Prostate gland (tissue), 2 donors: ENCODE measurements at regions of chr11 and their contacts with region 1.

Region 1: GRCh38 chr11:17598700-17599459 is 51.8 kb downstream of the OTOG start:
- DNase-seq: peak; percentile 36
- H3K4me3 ChIP-seq: no peak overlapping the region
- H3K27ac ChIP-seq: no peak overlapping the region
- H3K4me1 ChIP-seq: no peaks in the 10 kb centered on the region
- H3K27me3 ChIP-seq: no peaks in the 10 kb centered on the region
- CTCF ChIP-seq: peak; percentile 55 to 78 (median 70)
- POLR2A ChIP-seq: no peak

Region 2: GRCh38 chr11:17722000-17722643 is 123.2 kb after region 1 on chr11:
- intact Hi-C with region 1: loop called (anchors 10 kb)
- DNase-seq: no peak
- H3K4me3 ChIP-seq: no peak overlapping the region
- H3K27ac ChIP-seq: no peak overlapping the region
- H3K4me1 ChIP-seq: peaks cover 3% of the 10 kb centered on the region
- H3K27me3 ChIP-seq: peaks cover 38% of the 10 kb centered on the region
- CTCF ChIP-seq: no peak
- POLR2A ChIP-seq: no peak

Region 3: GRCh38 chr11:17972987-17973386 is 374.1 kb after region 1 on chr11:
- intact Hi-C with region 1: loop called (anchors 5 kb)
- DNase-seq: peak; percentile 44
- H3K4me3 ChIP-seq: no peak overlapping the region
- H3K27ac ChIP-seq: no peak overlapping the region
- H3K4me1 ChIP-seq: no peaks in the 10 kb centered on the region
- H3K27me3 ChIP-seq: no peaks in the 10 kb centered on the region
- CTCF ChIP-seq: peak in 3 of 4 experiments; percentile 45 to 59 (median 50)
- POLR2A ChIP-seq: no peak

Region 4: DNA sequence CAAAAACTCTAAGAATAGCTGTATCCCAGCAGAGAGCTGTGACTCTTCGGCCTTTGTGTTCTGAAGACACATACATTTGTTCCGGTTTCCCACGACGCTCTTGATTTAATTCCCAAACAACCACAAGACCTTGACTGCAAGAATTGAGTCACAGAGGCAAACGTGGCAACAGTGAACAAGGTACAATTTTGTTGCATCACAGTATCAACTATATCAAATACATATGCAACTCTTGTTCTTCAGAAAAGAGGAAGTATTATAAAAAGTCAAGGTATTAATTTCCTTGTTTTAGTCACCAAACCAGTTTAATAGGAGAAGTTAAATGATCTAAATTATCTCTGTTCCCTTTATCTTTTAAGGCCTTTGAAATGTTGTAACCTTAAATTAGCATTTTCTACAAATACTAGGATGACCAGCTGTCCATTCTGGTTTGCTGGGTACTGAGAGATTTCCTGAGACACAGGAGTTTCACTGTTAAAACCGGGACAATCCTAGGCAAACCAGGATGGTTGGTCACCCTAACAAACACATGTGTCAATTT is 712.0 kb after region 1 on chr11:
- intact Hi-C with region 1: no loop called
- DNase-seq: no peak
- H3K4me3 ChIP-seq: no peak overlapping the region
- H3K27ac ChIP-seq: no peak overlapping the region
- H3K4me1 ChIP-seq: no peaks in the 10 kb centered on the region
- H3K27me3 ChIP-seq: no peaks in the 10 kb centered on the region
- CTCF ChIP-seq: no peak
- POLR2A ChIP-seq: no peak